Left cardiac atrium (tissue), 4 donors: ENCODE measurements at regions of chr21 and their contacts with region 1.

Region 1: DNA sequence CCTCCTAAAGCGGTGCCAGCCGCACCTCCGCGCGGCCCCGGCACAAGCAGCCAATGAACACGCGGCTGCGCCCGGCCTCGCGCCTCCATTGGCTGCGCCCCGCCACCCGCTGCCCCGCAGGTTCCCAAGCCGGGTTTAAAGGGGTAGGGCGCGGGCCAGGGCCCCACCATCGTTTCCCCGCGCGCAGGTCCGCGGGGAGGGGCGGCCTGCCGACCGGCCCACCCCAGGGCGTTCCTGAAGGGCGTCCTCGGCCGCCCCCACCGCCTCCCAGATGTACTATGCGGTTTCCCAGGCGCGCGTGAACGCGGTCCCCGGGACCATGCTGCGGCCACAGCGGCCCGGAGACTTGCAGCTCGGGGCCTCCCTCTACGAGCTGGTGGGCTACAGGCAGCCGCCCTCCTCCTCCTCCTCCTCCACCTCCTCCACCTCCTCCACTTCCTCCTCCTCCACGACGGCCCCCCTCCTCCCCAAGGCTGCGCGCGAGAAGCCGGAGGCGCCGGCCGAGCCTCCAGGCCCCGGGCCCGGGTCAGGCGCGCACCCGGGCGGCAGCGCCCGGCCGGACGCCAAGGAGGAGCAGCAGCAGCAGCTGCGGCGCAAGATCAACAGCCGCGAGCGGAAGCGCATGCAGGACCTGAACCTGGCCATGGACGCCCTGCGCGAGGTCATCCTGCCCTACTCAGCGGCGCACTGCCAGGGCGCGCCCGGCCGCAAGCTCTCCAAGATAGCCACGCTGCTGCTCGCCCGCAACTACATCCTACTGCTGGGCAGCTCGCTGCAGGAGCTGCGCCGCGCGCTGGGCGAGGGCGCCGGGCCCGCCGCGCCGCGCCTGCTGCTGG is at the start of gene OLIG1:
- DNase-seq: peak; percentile 45
- ATAC-seq: peak; percentile 77 to 90
- total RNA-seq, gene OLIG1: 0.27 TPM in 1 of 2 donors, not detected in the other

Region 2: GRCh38 chr21:33025489-33026442 is 44.4 kb before region 1 on chr21 and contains the start of gene OLIG2:
- intact Hi-C with region 1: loop called in 1 of 2 experiments (anchors 5 kb)
- DNase-seq: no peak
- ATAC-seq: peak in 1 of 2 donors; percentile 46
- total RNA-seq, gene OLIG2: not detected